ENCODE measurements at regions of chr19 and their contacts with region 1.

Region 1: GRCh38 chr19:43743022-43743421 is 11.7 kb downstream of the SMG9 start:
- DNase-seq: no peak
- H3K4me3 ChIP-seq: no peak overlapping the region
- H3K4me3 Mint-ChIP-seq: no peak overlapping the region
- H3K27ac ChIP-seq: no peak overlapping the region
- H3K27ac Mint-ChIP-seq: peak overlapping the region in 2 of 8 donors; percentile 60 to 63
- H3K4me1 ChIP-seq: no peaks in the 10 kb centered on the region
- H3K4me1 Mint-ChIP-seq: peaks cover 19 to 26% (median 24%) of the 10 kb centered on the region in 3 donors
- H3K27me3 ChIP-seq: no peaks in the 10 kb centered on the region
- H3K27me3 Mint-ChIP-seq: peaks cover 0 to 2% of the 10 kb centered on the region in 2 donors

Region 2: GRCh38 chr19:43784981-43785808 is 42.2 kb after region 1 on chr19:
- CTCF ChIA-PET with region 1: interaction called, 25 read pairs
- POLR2A ChIA-PET with region 1: interaction called, 5 read pairs
- DNase-seq: peak in 4 of 5 donors; percentile 40 to 68 (median 58)
- H3K4me3 ChIP-seq: no peak overlapping the region
- H3K4me3 Mint-ChIP-seq: peak overlapping the region; percentile 17 to 93 (median 62)
- H3K27ac ChIP-seq: peak overlapping the region; percentile 54
- H3K27ac Mint-ChIP-seq: peak overlapping the region in 7 of 8 donors; percentile 16 to 94 (median 78)
- H3K4me1 ChIP-seq: peaks cover 31% of the 10 kb centered on the region
- H3K4me1 Mint-ChIP-seq: peaks cover 36 to 45% (median 42%) of the 10 kb centered on the region in 3 donors
- H3K27me3 ChIP-seq: no peaks in the 10 kb centered on the region
- H3K27me3 Mint-ChIP-seq: peaks cover 14% of the 10 kb centered on the region in 2 donors

Region 3: GRCh38 chr19:43809762-43810696 is 67.0 kb after region 1 on chr19:
- CTCF ChIA-PET with region 1: interaction called, 31 read pairs
- POLR2A ChIA-PET with region 1: no interaction called
- DNase-seq: peak in 2 of 5 donors; percentile 31 to 40
- H3K4me3 ChIP-seq: no peak overlapping the region
- H3K4me3 Mint-ChIP-seq: no peak overlapping the region
- H3K27ac ChIP-seq: no peak overlapping the region
- H3K27ac Mint-ChIP-seq: no peak overlapping the region
- H3K4me1 ChIP-seq: no peaks in the 10 kb centered on the region
- H3K4me1 Mint-ChIP-seq: peaks cover 0 to 4% (median 0%) of the 10 kb centered on the region in 3 donors
- H3K27me3 ChIP-seq: no peaks in the 10 kb centered on the region
- H3K27me3 Mint-ChIP-seq: peaks cover 20 to 38% of the 10 kb centered on the region in 2 donors

Measured in CD8-positive, alpha-beta memory T cell (primary cell).